ENCODE measurements at regions of chr2 and their contacts with region 1.

Region 1: GRCh38 chr2:122927197-122927596 is 1097.9 kb upstream of the CNTNAP5 start:
- DNase-seq: peak; percentile 98
- H3K4me3 ChIP-seq: no peak overlapping the region
- H3K27ac ChIP-seq: no peak overlapping the region
- H3K4me1 ChIP-seq: peaks cover 16% of the 10 kb centered on the region
- H3K27me3 ChIP-seq: peaks cover 7% of the 10 kb centered on the region
- CTCF ChIP-seq: no peak

Region 2: DNA sequence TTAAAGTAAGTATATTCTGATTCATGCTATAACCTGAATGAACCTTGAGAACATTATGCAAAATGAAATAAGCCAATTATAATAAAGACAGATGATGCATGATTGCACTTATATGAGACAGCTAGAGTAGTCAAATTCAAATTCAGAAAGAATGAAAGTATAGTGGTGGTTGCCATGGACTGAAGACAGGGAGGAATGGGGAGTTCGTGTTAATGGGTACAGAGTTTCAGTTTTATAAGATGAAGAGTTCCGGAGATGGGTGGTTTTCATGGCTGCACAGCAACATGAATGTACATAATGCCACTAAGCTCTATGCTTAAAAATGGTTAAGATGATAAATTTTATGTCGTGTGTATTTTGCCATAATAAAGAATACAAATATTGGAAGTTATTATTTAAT is 420.6 kb before region 1 on chr2:
- CTCF ChIA-PET with region 1: no interaction called
- POLR2A ChIA-PET with region 1: no interaction called
- intact Hi-C with region 1: loop called (anchors 2 kb)
- DNase-seq: no peak
- H3K4me3 ChIP-seq: no peak overlapping the region
- H3K27ac ChIP-seq: peak overlapping the region; percentile 17
- H3K4me1 ChIP-seq: peaks cover 55% of the 10 kb centered on the region
- H3K27me3 ChIP-seq: no peaks in the 10 kb centered on the region
- CTCF ChIP-seq: no peak